ENCODE measurements at regions of chr17 and their contacts with region 1.

Region 1: DNA sequence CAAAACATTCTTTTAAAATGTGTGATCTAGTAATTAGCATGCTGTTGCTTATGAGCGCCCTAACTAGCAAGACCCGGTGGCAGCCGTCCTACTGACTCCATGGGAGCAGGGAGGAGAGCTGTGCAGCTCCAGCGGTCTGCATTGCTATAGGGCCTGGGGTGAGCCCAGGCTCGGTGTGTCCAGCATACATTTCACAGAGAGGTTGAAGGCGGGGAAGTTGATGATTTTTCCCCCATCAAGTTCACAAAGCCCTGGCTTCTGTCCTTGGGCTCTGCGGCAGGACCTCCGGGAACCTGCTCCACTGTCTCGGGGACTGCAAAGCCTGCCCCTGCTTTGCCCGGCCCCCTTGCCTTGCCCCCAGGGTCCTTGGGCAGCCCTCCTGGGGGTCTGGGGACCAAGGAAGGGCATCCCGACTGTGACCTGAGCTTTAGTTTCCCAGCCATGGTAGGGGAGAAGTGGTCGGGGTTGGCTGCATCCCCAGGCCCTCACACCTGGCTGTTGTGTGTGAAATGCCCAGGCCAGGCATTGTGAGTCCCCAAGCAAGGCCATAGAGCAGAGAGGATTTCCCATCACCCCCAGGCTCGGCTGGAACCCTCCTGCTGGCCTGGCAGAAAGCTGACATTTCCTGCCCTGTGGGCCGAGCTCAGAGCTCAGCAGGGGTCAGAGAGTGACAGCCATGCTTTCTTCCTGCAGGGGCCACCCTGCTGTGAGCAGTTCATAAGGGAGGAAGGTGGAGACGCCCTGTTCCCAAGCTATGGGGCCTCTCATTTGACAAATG is 24.8 kb downstream of the KCNJ12 start:
- DNase-seq: no peak

Region 2: GRCh38 chr17:20266806-20267458 is 1134.1 kb before region 1 on chr17:
- intact Hi-C with region 1: loop called in 1 of 2 experiments (anchors 5 kb)
- DNase-seq: no peak